Psoas muscle (tissue), 8 donors: ENCODE measurements at regions of chr17 and their contacts with region 1.

Region 1: GRCh38 chr17:66975604-66976384 is 11.3 kb downstream of the CACNG4 start:
- DNase-seq: peak in 1 of 2 donors; percentile 72
- ATAC-seq: peak; percentile 37 to 58 (median 52)
- H3K4me3 ChIP-seq: no peak overlapping the region
- H3K27ac ChIP-seq: no peak overlapping the region
- H3K4me1 ChIP-seq: peaks cover 34% of the 10 kb centered on the region
- H3K27me3 ChIP-seq: peaks cover 0 to 3% (median 0%) of the 10 kb centered on the region in 3 donors
- CTCF ChIP-seq: peak; percentile 21

Region 2: GRCh38 chr17:66915204-66916096 is 60.3 kb before region 1 on chr17:
- intact Hi-C with region 1: loop called in 1 of 2 experiments (anchors 5 kb)
- DNase-seq: peak in 1 of 2 donors; percentile 64
- ATAC-seq: peak; percentile 68 to 85 (median 76)
- H3K4me3 ChIP-seq: no peak overlapping the region
- H3K27ac ChIP-seq: no peak overlapping the region
- H3K4me1 ChIP-seq: no peaks in the 10 kb centered on the region
- H3K27me3 ChIP-seq: peaks cover 0 to 4% (median 0%) of the 10 kb centered on the region in 3 donors
- CTCF ChIP-seq: peak; percentile 33

Region 3: GRCh38 chr17:67042104-67042899 is 66.5 kb after region 1 on chr17:
- intact Hi-C with region 1: loop called in 1 of 2 experiments (anchors 5 kb)
- DNase-seq: no peak
- ATAC-seq: no peak
- H3K4me3 ChIP-seq: peak overlapping the region; percentile 72
- H3K27ac ChIP-seq: peak overlapping the region; percentile 98
- H3K4me1 ChIP-seq: peaks cover 20% of the 10 kb centered on the region
- H3K27me3 ChIP-seq: no peaks in the 10 kb centered on the region
- CTCF ChIP-seq: no peak

Region 4: GRCh38 chr17:67082107-67082506 is 106.3 kb after region 1 on chr17:
- intact Hi-C with region 1: no loop called
- DNase-seq: no peak
- ATAC-seq: no peak
- H3K4me3 ChIP-seq: no peak overlapping the region
- H3K27ac ChIP-seq: no peak overlapping the region
- H3K4me1 ChIP-seq: peaks cover 15% of the 10 kb centered on the region
- H3K27me3 ChIP-seq: no peaks in the 10 kb centered on the region
- CTCF ChIP-seq: no peak